ENCODE measurements at regions of chr1 and their contacts with region 1.

Region 1: DNA sequence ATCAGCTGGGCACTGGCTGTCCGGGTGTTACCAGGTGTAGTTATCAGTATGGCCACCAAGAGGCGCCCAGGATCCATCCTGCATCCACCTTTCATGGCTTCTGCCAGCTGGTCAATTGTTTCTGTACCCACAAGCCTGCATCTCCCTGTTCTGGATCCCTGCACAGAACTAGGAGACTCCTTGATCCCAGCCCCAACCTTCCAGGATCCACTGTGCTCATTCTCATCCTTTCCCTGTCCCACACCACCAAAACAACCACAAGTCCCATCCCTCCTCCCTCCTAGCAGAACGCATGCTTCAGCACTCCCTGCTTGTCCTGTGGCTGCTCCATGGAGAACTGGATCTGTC is 27.2 kb upstream of the FOXE3 start:
- DNase-seq: peak; percentile 71
- H3K4me3 Mint-ChIP-seq: no peak overlapping the region
- H3K27ac Mint-ChIP-seq: no peak overlapping the region
- H3K4me1 Mint-ChIP-seq: no peaks in the 10 kb centered on the region
- H3K27me3 Mint-ChIP-seq: no peaks in the 10 kb centered on the region

Region 2: DNA sequence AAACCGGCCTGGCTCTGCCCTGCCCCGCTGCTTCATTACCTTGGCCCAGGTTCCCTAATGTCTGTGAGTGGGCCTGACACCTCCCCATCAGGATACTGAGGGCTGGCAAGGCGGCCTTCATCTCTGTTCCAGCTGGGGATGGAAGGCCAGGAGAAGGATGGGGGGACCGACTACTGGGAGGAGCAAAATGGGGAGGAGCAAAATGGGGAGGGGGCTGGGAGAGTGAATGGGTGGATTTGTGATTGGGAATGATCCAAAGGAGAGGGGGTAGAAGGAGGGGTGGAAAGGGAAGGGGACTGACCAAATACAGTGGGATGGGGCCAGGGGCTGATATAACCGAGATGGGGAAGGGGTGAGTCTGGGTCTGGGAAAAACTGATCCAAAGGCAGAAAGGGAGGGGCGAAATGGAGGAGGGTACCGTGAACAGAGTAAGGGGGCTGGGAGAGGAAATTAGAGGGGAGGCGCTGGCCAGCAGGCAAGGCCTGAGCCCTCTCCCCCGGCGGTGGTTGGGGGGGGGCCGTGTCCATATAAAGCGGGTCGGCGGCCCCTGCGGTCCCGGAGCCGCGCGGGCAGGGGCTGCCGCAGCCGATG is 27.0 kb after region 1 on chr1 and contains the start of gene FOXE3:
- CTCF ChIA-PET with region 1: interaction called, 10 read pairs
- POLR2A ChIA-PET with region 1: no interaction called
- intact Hi-C with region 1: no loop called
- DNase-seq: no peak
- H3K4me3 Mint-ChIP-seq: peak within 1 kb of the TSS; percentile 48
- H3K27ac Mint-ChIP-seq: no peak within 1 kb of the TSS
- H3K4me1 Mint-ChIP-seq: peaks cover 2% of the 10 kb centered on the region
- H3K27me3 Mint-ChIP-seq: peaks cover 30% of the 10 kb centered on the region
- total RNA-seq, gene FOXE3: not detected

Region 3: GRCh38 chr1:47424336-47424982 is 35.6 kb after region 1 on chr1:
- CTCF ChIA-PET with region 1: interaction called, 21 read pairs
- POLR2A ChIA-PET with region 1: no interaction called
- intact Hi-C with region 1: no loop called
- DNase-seq: no peak
- H3K4me3 Mint-ChIP-seq: no peak overlapping the region
- H3K27ac Mint-ChIP-seq: no peak overlapping the region
- H3K4me1 Mint-ChIP-seq: no peaks in the 10 kb centered on the region
- H3K27me3 Mint-ChIP-seq: peaks cover 3% of the 10 kb centered on the region

Region 4: DNA sequence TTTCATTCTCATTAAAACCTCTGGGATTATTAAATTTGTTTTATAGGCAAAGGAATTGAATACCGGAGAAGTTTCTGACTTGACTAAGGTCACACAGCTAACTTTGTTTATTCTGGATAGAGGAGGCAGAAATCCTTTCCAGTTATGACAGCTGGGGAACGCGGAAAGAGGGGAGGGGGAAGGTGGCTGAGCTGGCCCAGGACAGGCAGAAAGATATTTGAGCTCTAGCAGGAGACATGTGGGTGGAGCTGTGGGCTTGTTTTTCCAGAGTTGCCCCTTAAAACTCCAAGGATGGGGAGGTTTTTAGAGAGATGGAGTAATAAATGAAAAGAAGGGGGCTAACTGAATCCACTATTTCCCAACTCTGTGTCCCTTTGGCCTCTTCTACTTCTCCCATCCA is 76.7 kb after region 1 on chr1:
- CTCF ChIA-PET with region 1: no interaction called
- POLR2A ChIA-PET with region 1: no interaction called
- intact Hi-C with region 1: no loop called
- DNase-seq: no peak
- H3K4me3 Mint-ChIP-seq: no peak overlapping the region
- H3K27ac Mint-ChIP-seq: no peak overlapping the region
- H3K4me1 Mint-ChIP-seq: no peaks in the 10 kb centered on the region
- H3K27me3 Mint-ChIP-seq: peaks cover 37% of the 10 kb centered on the region

Region 5: GRCh38 chr1:47710329-47711071 is 321.6 kb after region 1 on chr1:
- CTCF ChIA-PET with region 1: interaction called, 51 read pairs
- POLR2A ChIA-PET with region 1: no interaction called
- intact Hi-C with region 1: loop called (anchors 2 kb)
- DNase-seq: peak; percentile 77
- H3K4me3 Mint-ChIP-seq: peak overlapping the region; percentile 18
- H3K27ac Mint-ChIP-seq: no peak overlapping the region
- H3K4me1 Mint-ChIP-seq: peaks cover 7% of the 10 kb centered on the region
- H3K27me3 Mint-ChIP-seq: peaks cover 69% of the 10 kb centered on the region

Region 6: GRCh38 chr1:47755101-47755990 is 366.5 kb after region 1 on chr1:
- CTCF ChIA-PET with region 1: interaction called, 11 read pairs
- POLR2A ChIA-PET with region 1: no interaction called
- intact Hi-C with region 1: no loop called
- DNase-seq: peak; percentile 70
- H3K4me3 Mint-ChIP-seq: no peak overlapping the region
- H3K27ac Mint-ChIP-seq: no peak overlapping the region
- H3K4me1 Mint-ChIP-seq: no peaks in the 10 kb centered on the region
- H3K27me3 Mint-ChIP-seq: peaks cover 9% of the 10 kb centered on the region

Measured in activated CD4-positive, alpha-beta memory T cell treated with anti-CD3 and anti-CD28 coated beads for 36 hours (primary cell).